ENCODE measurements at regions of chr1 and their contacts with region 1.

Region 1: GRCh38 chr1:240888039-240888786 is 276.3 kb upstream of the GREM2 start:
- DNase-seq: peak; percentile 28 to 47
- ATAC-seq: peak in 1 of 2 experiments; percentile 70; a peak in 4 of 6 replicates
- H3K4me3 ChIP-seq: no peak overlapping the region
- H3K27ac ChIP-seq: no peak overlapping the region
- H3K4me1 ChIP-seq: no peaks in the 10 kb centered on the region
- CTCF ChIP-seq: peak; percentile 71
- EP300 ChIP-seq: no peak
- POLR2A ChIP-seq: no peak
- RAD21 ChIP-seq: peak; percentile 77 to 83

Region 2: GRCh38 chr1:240719953-240720700 is 168.1 kb before region 1 on chr1:
- CTCF ChIA-PET with region 1: no interaction called
- POLR2A ChIA-PET with region 1: no interaction called
- DNase-seq: no peak
- ATAC-seq: no peak
- H3K4me3 ChIP-seq: no peak overlapping the region
- H3K27ac ChIP-seq: no peak overlapping the region
- H3K4me1 ChIP-seq: no peaks in the 10 kb centered on the region
- CTCF ChIP-seq: no peak
- EP300 ChIP-seq: no peak
- POLR2A ChIP-seq: no peak
- RAD21 ChIP-seq: no peak

Region 3: DNA sequence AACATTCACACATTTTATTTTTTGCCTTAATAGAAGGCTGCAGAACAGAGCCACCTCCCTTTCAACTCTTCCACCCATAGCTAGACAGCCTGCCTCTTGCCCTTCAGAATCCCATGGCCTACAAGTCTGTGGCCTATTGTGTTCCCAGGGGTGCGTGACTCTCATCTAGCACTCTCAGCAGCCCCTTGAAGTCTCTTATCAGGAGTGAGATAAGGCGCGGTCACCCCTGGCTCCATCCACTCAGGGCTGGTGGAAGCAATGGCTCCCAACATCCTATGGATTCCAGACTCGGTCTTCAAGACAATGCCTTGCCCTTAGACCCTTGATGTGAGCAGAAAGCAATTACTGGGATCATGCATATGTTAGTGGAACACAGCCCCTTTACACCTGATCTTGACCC is 12.1 kb before region 1 on chr1:
- CTCF ChIA-PET with region 1: interaction called, 12 read pairs
- POLR2A ChIA-PET with region 1: no interaction called
- DNase-seq: no peak
- ATAC-seq: no peak
- H3K4me3 ChIP-seq: no peak overlapping the region
- H3K27ac ChIP-seq: no peak overlapping the region
- H3K4me1 ChIP-seq: no peaks in the 10 kb centered on the region
- CTCF ChIP-seq: no peak
- EP300 ChIP-seq: no peak
- POLR2A ChIP-seq: no peak
- RAD21 ChIP-seq: no peak

Region 4: DNA sequence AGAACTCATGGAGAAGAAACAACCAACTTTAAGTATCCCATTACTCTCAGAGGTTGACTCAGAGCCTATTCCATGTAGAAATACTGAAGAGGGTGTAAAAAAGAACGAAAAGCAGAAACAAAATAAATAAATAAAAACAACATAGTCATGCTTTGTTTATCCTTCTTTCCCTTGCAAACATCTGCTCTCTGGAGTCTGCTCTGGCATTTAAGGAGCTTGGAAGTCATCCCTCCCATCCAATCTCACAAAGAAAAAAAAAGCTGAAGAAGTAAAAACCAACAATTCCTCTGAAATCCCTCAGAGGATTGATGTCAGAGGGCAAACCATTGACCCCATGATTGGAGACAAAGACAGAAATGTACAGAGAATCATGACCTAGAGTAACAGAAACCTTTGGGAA is 26.3 kb after region 1 on chr1:
- CTCF ChIA-PET with region 1: no interaction called
- POLR2A ChIA-PET with region 1: no interaction called
- DNase-seq: no peak
- ATAC-seq: no peak
- H3K4me3 ChIP-seq: no peak overlapping the region
- H3K27ac ChIP-seq: no peak overlapping the region
- H3K4me1 ChIP-seq: no peaks in the 10 kb centered on the region
- CTCF ChIP-seq: no peak
- EP300 ChIP-seq: no peak
- POLR2A ChIP-seq: no peak
- RAD21 ChIP-seq: no peak

Region 5: DNA sequence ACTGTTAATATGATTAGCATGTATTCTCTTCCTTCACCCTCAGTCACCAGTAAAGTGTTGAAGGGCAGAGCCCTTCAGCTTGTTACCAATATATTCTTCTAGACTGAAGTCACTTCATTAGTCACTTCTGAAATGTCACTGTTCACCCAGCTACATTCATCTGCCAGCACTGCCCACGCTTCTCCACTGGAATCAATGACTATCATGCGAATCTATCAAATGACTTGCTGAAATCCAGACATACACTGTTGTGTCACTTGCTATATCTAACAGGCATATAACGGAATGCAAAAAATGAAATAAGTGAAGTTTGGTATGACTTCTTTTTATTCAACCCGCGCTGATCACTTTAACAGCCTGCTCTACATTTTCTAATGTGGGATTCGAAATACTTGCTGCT is 615.2 kb after region 1 on chr1:
- CTCF ChIA-PET with region 1: interaction called, 12 read pairs
- POLR2A ChIA-PET with region 1: no interaction called
- DNase-seq: no peak
- ATAC-seq: no peak
- H3K4me3 ChIP-seq: no peak overlapping the region
- H3K27ac ChIP-seq: no peak overlapping the region
- H3K4me1 ChIP-seq: no peaks in the 10 kb centered on the region
- CTCF ChIP-seq: no peak
- EP300 ChIP-seq: no peak
- POLR2A ChIP-seq: no peak
- RAD21 ChIP-seq: no peak